ENCODE measurements at regions of chr12 and their contacts with region 1.

Region 1: DNA sequence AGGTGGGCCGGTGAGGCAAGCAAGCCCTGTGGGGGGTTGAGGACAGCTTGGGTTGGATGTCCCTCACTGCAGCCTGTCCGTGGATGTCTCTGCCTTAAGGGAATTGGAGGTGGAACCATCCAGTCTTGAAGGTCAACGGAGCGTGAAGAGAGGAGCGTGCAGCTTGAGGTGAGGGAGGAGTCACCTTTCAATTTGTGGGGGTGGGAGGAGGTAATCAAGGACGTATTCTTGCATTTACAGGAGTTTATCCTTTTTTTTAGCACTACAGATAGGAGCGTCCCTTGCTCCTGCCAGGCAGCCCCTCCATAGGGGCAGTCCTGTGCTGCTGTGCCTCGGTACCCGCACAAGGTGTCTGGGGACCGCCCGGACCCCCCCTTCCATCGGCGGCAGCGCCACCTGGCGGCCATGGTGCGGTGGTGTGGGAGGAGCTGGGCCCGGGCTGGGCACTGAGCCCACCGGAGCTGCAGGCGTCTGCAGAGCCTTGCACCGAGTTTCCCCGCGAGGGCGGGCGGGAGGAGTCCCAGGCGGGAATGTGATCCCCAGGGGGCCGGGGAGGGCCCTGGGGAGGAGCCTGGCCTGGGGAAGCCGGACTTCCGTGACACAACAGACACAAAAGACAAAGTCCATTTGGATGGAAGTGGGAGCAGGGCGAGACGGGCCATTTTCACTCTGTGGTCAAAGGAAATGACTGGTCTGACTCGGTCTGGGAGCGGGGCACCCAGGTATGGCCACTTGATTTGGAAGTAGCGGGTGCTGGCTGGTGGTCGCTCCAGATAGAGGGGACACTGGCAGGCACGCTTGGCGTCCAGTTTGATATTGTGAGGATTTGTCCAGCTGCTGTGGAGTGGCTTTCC is 923 bp downstream of the DNAJC22 start:
- DNase-seq: peak; percentile 58 to 87 (median 76)
- ATAC-seq: peak; percentile 90
- H3K4me3 ChIP-seq: peak overlapping the region; percentile 85
- H3K4me3 Mint-ChIP-seq: peak overlapping the region; percentile 78 to 94 (median 88)
- H3K27ac ChIP-seq: no peak overlapping the region
- H3K27ac Mint-ChIP-seq: peak overlapping the region in 3 of 9 donors; percentile 15 to 76 (median 74)
- H3K4me1 ChIP-seq: peaks cover 41 to 44% of the 10 kb centered on the region in 2 donors
- H3K4me1 Mint-ChIP-seq: peaks cover 12 to 44% (median 35%) of the 10 kb centered on the region in 7 donors
- H3K27me3 ChIP-seq: peaks cover 26 to 49% of the 10 kb centered on the region in 2 donors
- H3K27me3 Mint-ChIP-seq: peaks cover 52 to 87% (median 71%) of the 10 kb centered on the region in 5 donors

Region 2: GRCh38 chr12:49088190-49088931 is 259.2 kb before region 1 on chr12:
- CTCF ChIA-PET with region 1: no interaction called
- POLR2A ChIA-PET with region 1: no interaction called
- intact Hi-C with region 1: loop called in 1 of 2 experiments (anchors 5 kb)
- DNase-seq: peak; percentile 39 to 73 (median 70)
- ATAC-seq: peak; percentile 94
- H3K4me3 ChIP-seq: no peak overlapping the region
- H3K4me3 Mint-ChIP-seq: peak overlapping the region in 7 of 10 donors; percentile 11 to 59 (median 48)
- H3K27ac ChIP-seq: no peak overlapping the region
- H3K27ac Mint-ChIP-seq: peak overlapping the region in 2 of 9 donors; percentile 5 to 34
- H3K4me1 ChIP-seq: peaks cover 35 to 40% of the 10 kb centered on the region in 2 donors
- H3K4me1 Mint-ChIP-seq: peaks cover 22 to 53% (median 38%) of the 10 kb centered on the region in 7 donors
- H3K27me3 ChIP-seq: peaks cover 14 to 37% of the 10 kb centered on the region in 2 donors
- H3K27me3 Mint-ChIP-seq: peaks cover 32 to 58% (median 49%) of the 10 kb centered on the region in 5 donors

Region 3: GRCh38 chr12:49288412-49288853 is 59.2 kb before region 1 on chr12:
- CTCF ChIA-PET with region 1: interaction called, 26 read pairs
- POLR2A ChIA-PET with region 1: no interaction called
- intact Hi-C with region 1: loop called (anchors 1 kb)
- DNase-seq: peak in 8 of 9 donors; percentile 37 to 71 (median 66)
- ATAC-seq: peak; percentile 85
- H3K4me3 ChIP-seq: no peak overlapping the region
- H3K4me3 Mint-ChIP-seq: no peak overlapping the region
- H3K27ac ChIP-seq: no peak overlapping the region
- H3K27ac Mint-ChIP-seq: no peak overlapping the region
- H3K4me1 ChIP-seq: no peaks in the 10 kb centered on the region
- H3K4me1 Mint-ChIP-seq: peaks cover 0 to 1% (median 0%) of the 10 kb centered on the region in 7 donors
- H3K27me3 ChIP-seq: no peaks in the 10 kb centered on the region
- H3K27me3 Mint-ChIP-seq: peaks cover 31 to 53% (median 38%) of the 10 kb centered on the region in 5 donors

Region 4: GRCh38 chr12:49336645-49337584 is 10.7 kb before region 1 on chr12 and contains the start of gene C1QL4:
- CTCF ChIA-PET with region 1: interaction called, 15 read pairs
- POLR2A ChIA-PET with region 1: no interaction called
- intact Hi-C with region 1: loop called (anchors 1 kb)
- DNase-seq: peak; percentile 73 to 96 (median 85)
- ATAC-seq: peak; percentile 98
- H3K4me3 ChIP-seq: peak within 1 kb of the TSS; percentile 46
- H3K4me3 Mint-ChIP-seq: peak within 1 kb of the TSS; percentile 31 to 77 (median 72)
- H3K27ac ChIP-seq: no peak within 1 kb of the TSS
- H3K27ac Mint-ChIP-seq: peak within 1 kb of the TSS in 1 of 9 donors; percentile 32
- H3K4me1 ChIP-seq: peaks cover 8 to 9% of the 10 kb centered on the region in 2 donors
- H3K4me1 Mint-ChIP-seq: peaks cover 16 to 39% (median 31%) of the 10 kb centered on the region in 7 donors
- H3K27me3 ChIP-seq: peaks cover 0 to 21% of the 10 kb centered on the region in 2 donors
- H3K27me3 Mint-ChIP-seq: peaks cover 64 to 93% (median 75%) of the 10 kb centered on the region in 5 donors
- total RNA-seq, gene C1QL4: not detected

Region 5: DNA sequence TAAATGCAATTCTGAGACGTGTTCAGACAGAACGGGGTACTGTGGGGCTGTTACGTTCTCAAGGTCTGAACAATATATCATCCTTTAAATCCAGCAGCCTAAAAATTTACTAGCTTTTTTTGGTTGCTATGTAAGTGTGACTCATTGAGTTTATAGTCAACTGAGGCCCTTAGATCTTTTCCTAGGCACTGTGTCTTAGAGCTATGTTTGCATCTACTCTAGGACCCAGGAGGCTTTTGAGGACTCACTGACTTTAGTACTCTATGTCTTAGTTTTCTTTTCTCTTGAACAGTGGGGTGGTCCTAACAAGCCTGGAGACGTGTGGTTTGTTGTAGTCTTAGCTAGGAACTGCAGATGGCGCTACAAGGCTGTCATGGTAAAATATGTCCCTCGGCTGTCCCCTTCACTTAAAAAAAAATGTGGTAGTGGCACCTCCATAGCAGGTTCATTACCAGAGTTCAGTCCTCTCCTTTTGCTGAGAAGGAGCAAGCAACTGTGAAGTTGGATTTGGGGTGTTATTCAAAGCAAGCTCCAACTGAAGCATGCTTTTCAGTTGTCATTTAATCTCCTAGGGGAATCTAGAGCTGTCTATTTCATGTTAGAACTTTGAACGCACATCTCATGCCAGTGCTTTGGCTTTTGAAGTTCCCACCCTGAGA is 11.0 kb after region 1 on chr12:
- CTCF ChIA-PET with region 1: interaction called, 19 read pairs
- POLR2A ChIA-PET with region 1: no interaction called
- intact Hi-C with region 1: no loop called
- DNase-seq: peak in 7 of 9 donors; percentile 48 to 75 (median 63)
- ATAC-seq: peak; percentile 95
- H3K4me3 ChIP-seq: no peak overlapping the region
- H3K4me3 Mint-ChIP-seq: no peak overlapping the region
- H3K27ac ChIP-seq: no peak overlapping the region
- H3K27ac Mint-ChIP-seq: no peak overlapping the region
- H3K4me1 ChIP-seq: no peaks in the 10 kb centered on the region
- H3K4me1 Mint-ChIP-seq: peaks cover 0 to 7% (median 4%) of the 10 kb centered on the region in 7 donors
- H3K27me3 ChIP-seq: no peaks in the 10 kb centered on the region
- H3K27me3 Mint-ChIP-seq: peaks cover 8 to 48% (median 30%) of the 10 kb centered on the region in 5 donors

Region 6: DNA sequence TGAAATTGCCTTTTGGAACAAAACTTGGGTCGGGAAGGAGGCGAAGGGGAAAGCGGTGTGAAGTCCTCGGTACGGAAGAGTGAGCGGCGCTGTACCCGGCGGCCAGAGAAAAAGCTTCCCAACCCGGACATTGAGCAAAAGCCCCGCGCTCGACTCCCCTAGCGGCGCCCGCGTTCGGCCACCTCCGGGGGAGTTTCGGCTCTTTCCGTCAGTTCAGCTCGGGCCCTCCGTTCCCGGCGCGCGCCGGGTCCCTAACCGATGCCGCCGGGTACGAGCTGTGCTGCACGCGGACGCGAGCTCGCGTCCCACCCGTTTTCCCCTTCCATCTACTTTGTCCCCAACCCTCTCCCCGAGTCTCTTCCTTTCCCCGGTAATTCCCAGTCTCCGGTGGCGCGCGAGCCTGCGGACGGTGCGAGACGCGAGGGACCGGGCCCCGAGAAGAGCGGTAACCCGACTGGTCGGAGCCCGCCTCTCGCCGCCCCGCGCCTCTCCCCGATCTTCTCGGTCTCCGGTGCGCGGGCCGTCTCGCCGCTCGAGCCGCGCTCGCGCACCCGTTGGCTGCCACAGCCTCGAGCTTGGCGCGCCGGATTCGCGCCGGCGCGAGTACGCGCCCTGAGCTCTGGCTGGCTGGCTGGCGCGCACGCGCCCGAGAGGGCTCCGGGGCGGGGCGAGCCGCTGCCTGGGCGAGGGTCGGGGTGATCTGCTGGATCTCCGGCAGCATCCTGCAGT is 19.2 kb after region 1 on chr12:
- CTCF ChIA-PET with region 1: interaction called, 13 read pairs
- POLR2A ChIA-PET with region 1: interaction called, 8 read pairs
- intact Hi-C with region 1: loop called in 1 of 2 experiments (anchors 1 kb)
- DNase-seq: peak; percentile 72 to 95 (median 82)
- ATAC-seq: peak; percentile 90
- H3K4me3 ChIP-seq: peak overlapping the region; percentile 90
- H3K4me3 Mint-ChIP-seq: peak overlapping the region; percentile 71 to 97 (median 88)
- H3K27ac ChIP-seq: peak overlapping the region; percentile 87
- H3K27ac Mint-ChIP-seq: peak overlapping the region; percentile 65 to 97 (median 94)
- H3K4me1 ChIP-seq: peaks cover 0 to 15% of the 10 kb centered on the region in 2 donors
- H3K4me1 Mint-ChIP-seq: peaks cover 11 to 39% (median 31%) of the 10 kb centered on the region in 7 donors
- H3K27me3 ChIP-seq: no peaks in the 10 kb centered on the region
- H3K27me3 Mint-ChIP-seq: peaks cover 0 to 2% (median 0%) of the 10 kb centered on the region in 5 donors

Region 7: DNA sequence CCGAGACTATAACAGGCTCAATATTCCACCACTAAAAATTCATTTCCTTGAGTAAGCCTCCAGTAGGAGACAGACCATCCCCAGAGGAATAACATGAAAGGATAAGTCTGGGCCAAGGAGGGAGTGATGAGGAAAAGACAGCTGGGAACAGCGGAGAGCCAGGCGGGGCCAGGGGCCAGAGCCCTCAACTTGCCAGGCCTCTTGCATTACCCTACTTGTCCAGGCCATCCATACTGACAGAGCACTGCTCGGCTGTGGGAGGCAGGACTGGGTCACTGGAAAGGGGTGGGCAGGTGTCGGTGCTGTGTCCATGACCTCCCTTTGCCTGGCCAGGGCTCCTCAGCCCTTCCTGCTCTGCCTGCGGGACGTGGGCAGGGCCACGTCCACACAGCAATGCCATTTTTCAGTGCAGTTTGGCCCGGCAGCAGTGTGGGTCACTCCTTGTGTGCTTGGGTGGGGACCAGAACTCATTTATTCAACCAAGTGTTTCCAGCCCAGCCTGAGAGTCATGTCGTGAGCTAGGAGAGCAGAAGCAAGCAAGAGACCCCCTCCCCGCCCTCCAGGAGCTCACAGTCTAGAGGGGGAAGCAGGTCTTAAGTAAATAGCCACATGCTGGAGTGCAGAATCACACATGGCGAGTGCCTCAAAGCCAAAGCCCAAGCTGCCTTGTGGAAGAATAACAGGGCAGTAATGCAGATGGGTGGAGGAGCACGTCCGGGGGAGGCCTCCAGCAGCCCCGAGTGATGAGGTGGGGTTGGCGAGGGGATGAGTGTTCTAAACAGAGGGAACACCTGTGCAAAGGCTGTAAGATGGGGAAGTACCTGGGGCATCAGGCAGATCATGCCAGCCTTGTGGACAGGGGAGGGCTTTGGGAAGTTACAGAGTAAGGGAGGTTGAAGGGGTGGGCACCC is 565.0 kb after region 1 on chr12:
- CTCF ChIA-PET with region 1: no interaction called
- POLR2A ChIA-PET with region 1: no interaction called
- intact Hi-C with region 1: no loop called
- DNase-seq: no peak
- ATAC-seq: no peak
- H3K4me3 ChIP-seq: no peak overlapping the region
- H3K4me3 Mint-ChIP-seq: no peak overlapping the region
- H3K27ac ChIP-seq: no peak overlapping the region
- H3K27ac Mint-ChIP-seq: no peak overlapping the region
- H3K4me1 ChIP-seq: no peaks in the 10 kb centered on the region
- H3K4me1 Mint-ChIP-seq: no peaks in the 10 kb centered on the region
- H3K27me3 ChIP-seq: no peaks in the 10 kb centered on the region
- H3K27me3 Mint-ChIP-seq: peaks cover 0 to 7% (median 0%) of the 10 kb centered on the region in 5 donors

Region 8: GRCh38 chr12:50187084-50187900 is 839.7 kb after region 1 on chr12:
- CTCF ChIA-PET with region 1: no interaction called
- POLR2A ChIA-PET with region 1: no interaction called
- intact Hi-C with region 1: no loop called
- DNase-seq: peak in 1 of 9 donors; percentile 49
- ATAC-seq: peak; percentile 37
- H3K4me3 ChIP-seq: no peak overlapping the region
- H3K4me3 Mint-ChIP-seq: peak overlapping the region in 1 of 10 donors; percentile 70
- H3K27ac ChIP-seq: no peak overlapping the region
- H3K27ac Mint-ChIP-seq: peak overlapping the region in 6 of 9 donors; percentile 10 to 92 (median 71)
- H3K4me1 ChIP-seq: peaks cover 0 to 4% of the 10 kb centered on the region in 2 donors
- H3K4me1 Mint-ChIP-seq: peaks cover 12 to 57% (median 14%) of the 10 kb centered on the region in 7 donors
- H3K27me3 ChIP-seq: no peaks in the 10 kb centered on the region
- H3K27me3 Mint-ChIP-seq: no peaks in the 10 kb centered on the region